ENCODE measurements at regions of chr12 and their contacts with region 1.

Region 1: DNA sequence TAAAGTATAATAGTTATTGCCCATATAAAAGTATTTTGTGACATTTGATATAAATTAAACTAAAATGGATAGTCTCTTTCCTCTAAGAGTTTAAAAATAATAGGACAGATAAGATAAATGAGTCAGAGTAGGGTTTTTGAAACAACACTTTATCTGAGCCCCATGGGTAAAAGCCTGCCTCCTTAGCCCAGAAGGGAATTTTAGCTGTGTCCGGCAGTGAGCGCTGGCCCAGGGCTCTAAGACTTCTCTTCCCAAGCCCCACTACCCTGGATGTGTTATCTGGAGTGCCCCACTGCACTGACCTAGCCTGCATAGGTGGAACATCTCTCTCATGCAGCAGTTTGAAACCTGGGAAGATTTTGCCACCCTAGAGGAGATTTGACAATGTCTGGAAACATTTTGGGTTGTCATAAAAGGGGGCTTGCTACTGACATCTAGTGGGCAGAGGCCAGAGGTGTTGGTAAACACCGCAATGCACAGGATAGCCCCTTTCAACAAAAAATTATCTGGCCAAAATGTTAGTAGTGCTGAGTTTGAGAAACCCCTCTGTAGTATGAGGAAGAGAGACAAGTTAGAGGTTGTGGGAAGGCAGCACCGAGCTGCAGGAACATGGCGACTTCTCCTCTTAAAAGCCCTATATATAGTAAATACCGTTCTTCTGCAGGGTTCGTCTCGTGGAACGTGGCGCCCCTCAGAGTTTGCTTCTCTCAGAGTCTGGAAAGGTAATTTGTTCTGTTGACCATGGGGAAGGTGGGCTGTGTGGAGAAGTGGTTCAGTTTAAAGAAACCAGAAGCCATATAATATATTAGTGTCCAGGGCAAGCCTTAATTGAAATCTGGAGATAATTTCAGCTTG is 29.3 kb upstream of the ATF1 start:
- DNase-seq: no peak
- H3K4me3 ChIP-seq: no peak overlapping the region
- H3K27ac ChIP-seq: no peak overlapping the region
- H3K4me1 ChIP-seq: no peaks in the 10 kb centered on the region
- H3K27me3 ChIP-seq: no peaks in the 10 kb centered on the region
- CTCF ChIP-seq: peak; percentile 53 to 57

Region 2: DNA sequence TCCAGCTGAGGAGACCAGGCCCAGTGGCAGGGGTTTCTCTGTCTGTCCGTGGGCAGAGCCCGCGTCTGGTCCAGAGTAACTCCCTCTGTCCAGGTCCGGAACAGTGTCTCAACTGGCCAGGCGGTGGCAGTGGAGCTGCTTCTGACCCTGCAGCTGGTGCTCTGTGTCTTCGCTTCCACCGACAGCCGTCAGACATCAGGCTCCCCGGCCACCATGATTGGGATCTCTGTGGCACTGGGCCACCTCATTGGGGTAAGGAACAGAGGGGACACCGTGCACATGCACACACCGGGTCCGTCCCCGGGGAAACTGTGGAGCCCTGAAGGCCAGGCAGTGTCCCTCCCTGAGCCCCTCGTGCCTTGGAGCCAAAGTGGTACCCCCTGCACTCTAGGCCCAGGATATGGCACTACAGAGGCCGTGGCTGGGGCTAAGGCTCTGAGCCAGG is 760.4 kb before region 1 on chr12:
- CTCF ChIA-PET with region 1: no interaction called
- dilution Hi-C with region 1: no loop called
- in situ Hi-C with region 1: no loop called
- intact Hi-C with region 1: no loop called
- DNase-seq: no peak
- H3K4me3 ChIP-seq: no peak overlapping the region
- H3K27ac ChIP-seq: no peak overlapping the region
- H3K4me1 ChIP-seq: peaks cover 11% of the 10 kb centered on the region
- H3K27me3 ChIP-seq: no peaks in the 10 kb centered on the region
- CTCF ChIP-seq: peak in 1 of 2 donors; percentile 42

Region 3: DNA sequence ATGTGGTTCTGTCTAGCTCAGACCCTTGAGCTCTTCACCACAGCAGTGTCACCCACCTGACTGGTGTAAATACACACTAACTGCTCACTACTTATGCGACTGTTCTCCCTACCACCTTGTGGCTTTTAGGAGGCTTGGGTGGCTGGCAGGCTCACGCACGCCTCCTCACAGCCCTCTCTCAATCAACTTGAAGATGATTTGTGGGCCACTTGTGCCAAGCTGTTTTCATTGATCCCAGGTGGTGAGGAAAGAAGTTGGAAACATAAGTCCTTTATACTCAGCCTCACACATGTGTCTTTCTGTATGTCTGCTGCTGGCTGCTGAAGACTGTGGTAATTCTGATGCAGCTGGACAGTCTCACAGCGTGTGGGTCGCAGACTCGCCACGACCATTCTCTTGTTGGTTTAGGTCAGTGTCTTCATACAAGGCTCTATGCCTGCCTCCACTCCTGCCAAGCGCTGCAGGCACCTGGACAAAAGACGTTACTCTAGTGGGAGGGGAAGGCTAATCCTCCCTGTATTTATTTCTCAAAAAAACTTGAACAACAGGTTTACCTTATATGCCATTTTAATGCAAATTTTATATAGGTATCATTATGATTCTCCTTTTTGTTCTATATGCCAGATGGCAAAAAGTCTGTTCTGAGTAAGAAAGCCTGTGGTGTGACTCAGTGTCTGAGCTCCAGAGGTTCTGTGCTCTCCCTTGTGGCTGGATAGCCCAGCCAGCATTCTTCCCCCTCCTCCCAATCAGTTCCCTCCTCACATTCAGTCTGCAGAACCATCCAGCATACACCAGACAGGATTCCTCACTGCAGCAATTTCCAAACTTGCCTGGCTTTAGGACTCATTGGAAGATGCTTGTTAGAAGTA is 114.3 kb before region 1 on chr12:
- CTCF ChIA-PET with region 1: no interaction called
- dilution Hi-C with region 1: no loop called
- in situ Hi-C with region 1: no loop called
- intact Hi-C with region 1: no loop called
- DNase-seq: peak; percentile 88
- H3K4me3 ChIP-seq: no peak overlapping the region
- H3K27ac ChIP-seq: peak overlapping the region; percentile 76
- H3K4me1 ChIP-seq: peaks cover 65% of the 10 kb centered on the region
- H3K27me3 ChIP-seq: no peaks in the 10 kb centered on the region
- CTCF ChIP-seq: peak in 1 of 2 donors; percentile 38

Region 4: GRCh38 chr12:50677858-50678257 is 56.8 kb before region 1 on chr12:
- CTCF ChIA-PET with region 1: no interaction called
- dilution Hi-C with region 1: loop called (anchors 10 kb)
- in situ Hi-C with region 1: no loop called
- intact Hi-C with region 1: no loop called
- DNase-seq: peak; percentile 2
- H3K4me3 ChIP-seq: no peak overlapping the region
- H3K27ac ChIP-seq: no peak overlapping the region
- H3K4me1 ChIP-seq: no peaks in the 10 kb centered on the region
- H3K27me3 ChIP-seq: no peaks in the 10 kb centered on the region
- CTCF ChIP-seq: no peak